Activated T-helper 2 cell treated with anti-CD3 and anti-CD28 coated beads, Interferon-gamma antibody, Interleukin-2, Interleukin-4, amounts not matched to agents 10 μg/mL and 5 μg/mL and 100 μg/mL, durations not matched to agents 14 hours and 24 hours and 36 hours (primary cell): ENCODE measurements at regions of chr5 and their contacts with region 1.

Region 1: DNA sequence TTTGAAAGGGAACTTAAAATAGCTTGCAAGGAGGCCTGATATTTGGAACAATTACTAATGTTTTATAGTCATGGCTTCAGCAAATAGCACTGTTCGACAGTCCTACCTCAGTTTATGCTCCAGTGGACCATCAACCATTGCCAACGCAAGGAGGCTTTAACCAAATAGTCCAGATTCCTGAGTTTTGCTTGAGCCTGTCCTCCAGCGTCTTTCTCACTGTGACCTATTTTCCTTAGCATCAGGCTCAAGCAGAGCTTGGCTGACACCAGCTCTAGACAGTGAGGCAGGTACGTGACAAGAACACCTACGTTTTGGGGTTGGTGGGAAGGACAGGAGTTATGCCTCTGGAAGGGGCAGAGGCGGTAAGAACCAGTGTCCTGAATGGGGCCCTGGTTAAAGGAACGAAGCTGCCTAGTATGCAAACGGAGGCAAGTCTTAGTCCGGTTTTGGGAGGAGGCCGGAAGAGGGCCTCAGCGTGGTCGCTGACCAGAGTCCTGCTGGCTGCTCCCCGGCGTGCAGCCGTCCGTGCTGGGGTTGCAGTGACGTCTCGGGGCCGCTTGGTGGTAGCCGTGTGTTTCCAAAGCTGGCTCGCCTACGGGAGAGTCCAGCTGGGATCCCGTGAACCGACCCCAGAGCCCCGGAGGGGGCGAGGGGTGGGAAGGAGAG is 998 bp upstream of the FGF18 start:
- DNase-seq: peak; percentile 51
- H3K4me3 Mint-ChIP-seq: peak overlapping the region; percentile 71
- H3K27ac Mint-ChIP-seq: no peak overlapping the region
- H3K4me1 Mint-ChIP-seq: peaks cover 5% of the 10 kb centered on the region
- H3K27me3 Mint-ChIP-seq: peaks cover 27% of the 10 kb centered on the region

Region 2: GRCh38 chr5:171107669-171108068 is 310.8 kb before region 1 on chr5:
- intact Hi-C with region 1: no loop called
- DNase-seq: no peak
- H3K4me3 Mint-ChIP-seq: no peak overlapping the region
- H3K27ac Mint-ChIP-seq: no peak overlapping the region
- H3K4me1 Mint-ChIP-seq: no peaks in the 10 kb centered on the region
- H3K27me3 Mint-ChIP-seq: no peaks in the 10 kb centered on the region

Region 3: GRCh38 chr5:171310819-171311697 is 107.4 kb before region 1 on chr5:
- intact Hi-C with region 1: loop called (anchors 10 kb)
- DNase-seq: no peak
- H3K4me3 Mint-ChIP-seq: no peak overlapping the region
- H3K27ac Mint-ChIP-seq: no peak overlapping the region
- H3K4me1 Mint-ChIP-seq: peaks cover 4% of the 10 kb centered on the region
- H3K27me3 Mint-ChIP-seq: peaks cover 63% of the 10 kb centered on the region

Region 4: GRCh38 chr5:171606414-171607024 is 188.1 kb after region 1 on chr5:
- intact Hi-C with region 1: loop called (anchors 10 kb)
- DNase-seq: no peak
- H3K4me3 Mint-ChIP-seq: no peak overlapping the region
- H3K27ac Mint-ChIP-seq: no peak overlapping the region
- H3K4me1 Mint-ChIP-seq: no peaks in the 10 kb centered on the region
- H3K27me3 Mint-ChIP-seq: peaks cover 11% of the 10 kb centered on the region

Region 5: GRCh38 chr5:172044631-172045314 is 626.3 kb after region 1 on chr5:
- intact Hi-C with region 1: loop called (anchors 10 kb)
- DNase-seq: no peak
- H3K4me3 Mint-ChIP-seq: no peak overlapping the region
- H3K27ac Mint-ChIP-seq: peak overlapping the region; percentile 64
- H3K4me1 Mint-ChIP-seq: no peaks in the 10 kb centered on the region
- H3K27me3 Mint-ChIP-seq: no peaks in the 10 kb centered on the region